Lower leg skin (tissue), 4 donors: ENCODE measurements at regions of chr1 and their contacts with region 1.

Region 1: GRCh38 chr1:29235955-29236684 is at the start of gene PTPRU:
- DNase-seq: peak; percentile 41 to 96
- H3K4me3 ChIP-seq: peak within 1 kb of the TSS; percentile 47
- CTCF ChIP-seq: no peak
- POLR2A ChIP-seq: no peak
- total RNA-seq, gene PTPRU: 15.9 to 56.3 (median 30.6) TPM

Region 2: GRCh38 chr1:29383746-29384371 is 147.7 kb after region 1 on chr1:
- intact Hi-C with region 1: no loop called
- DNase-seq: no peak
- H3K4me3 ChIP-seq: no peak overlapping the region
- CTCF ChIP-seq: no peak
- POLR2A ChIP-seq: no peak

Region 3: DNA sequence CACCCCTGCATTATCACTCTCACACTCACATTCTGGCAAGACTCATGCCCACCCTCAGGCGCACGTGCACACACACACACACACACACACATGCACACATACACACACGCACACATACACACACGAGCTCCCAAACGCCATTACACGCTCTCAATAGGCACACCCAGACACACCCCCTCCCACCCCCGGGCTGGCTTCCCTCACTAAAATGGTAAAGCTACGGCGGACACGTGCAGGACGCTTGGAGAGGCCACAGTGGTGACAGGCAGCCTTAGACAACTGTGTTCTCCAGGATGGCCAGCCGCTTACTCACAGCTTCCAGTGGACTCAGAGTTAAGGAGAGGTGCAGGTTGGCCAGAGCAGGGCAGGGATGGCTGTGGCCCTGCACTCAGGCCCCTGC is 1477.2 kb after region 1 on chr1:
- intact Hi-C with region 1: loop called (anchors 5 kb)
- DNase-seq: no peak
- H3K4me3 ChIP-seq: no peak overlapping the region
- CTCF ChIP-seq: no peak
- POLR2A ChIP-seq: no peak

Region 4: GRCh38 chr1:30852026-30852425 is 1615.9 kb after region 1 on chr1:
- intact Hi-C with region 1: loop called (anchors 5 kb)
- DNase-seq: peak; percentile 65 to 94
- H3K4me3 ChIP-seq: no peak overlapping the region
- CTCF ChIP-seq: no peak
- POLR2A ChIP-seq: no peak